CD4-positive, alpha-beta memory T cell (primary cell): ENCODE measurements at regions of chr16 and their contacts with region 1.

Region 1: DNA sequence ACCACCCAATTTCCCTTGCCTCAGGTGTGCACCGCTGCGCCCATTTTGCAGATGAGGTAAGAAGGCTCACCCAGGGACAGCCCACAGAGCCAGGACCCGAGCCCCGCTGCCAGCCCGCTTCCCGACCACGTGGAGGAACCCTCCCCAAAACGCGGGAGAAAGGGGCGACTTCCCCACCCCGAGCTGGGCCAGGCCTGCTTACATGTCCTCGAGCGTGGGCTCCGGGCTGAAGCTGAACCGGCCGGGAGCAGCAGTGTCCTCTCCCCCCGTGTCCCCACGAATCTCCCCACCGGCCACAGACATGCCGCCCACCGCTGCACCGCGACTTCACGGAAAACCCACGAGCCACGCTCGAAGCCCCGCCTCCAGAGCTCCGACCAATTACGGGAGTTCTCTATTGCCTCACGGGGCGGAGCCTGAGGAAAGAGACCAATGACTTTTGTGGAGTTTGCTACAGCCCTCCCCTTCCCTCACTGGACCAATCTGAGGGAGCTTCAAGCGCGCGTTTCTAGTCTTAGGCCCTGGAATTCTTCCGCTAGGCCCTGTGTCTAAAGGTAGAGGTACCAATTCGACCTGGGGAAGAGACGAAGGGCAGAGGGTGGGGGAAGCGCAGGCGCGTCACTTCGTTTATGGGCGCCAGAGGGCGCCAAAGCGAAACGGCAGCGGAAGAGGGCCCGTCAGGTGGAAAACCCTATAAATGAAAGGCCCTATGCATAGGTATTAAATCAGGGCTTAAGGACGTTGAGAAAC is at the start of gene DCTPP1:
- DNase-seq: peak; percentile 95 to 99 (median 98)
- H3K4me3 ChIP-seq: peak within 1 kb of the TSS; percentile 76 to 84
- H3K4me3 Mint-ChIP-seq: peak within 1 kb of the TSS in 1 of 8 donors; percentile 35
- H3K27ac ChIP-seq: peak within 1 kb of the TSS; percentile 72
- H3K27ac Mint-ChIP-seq: peak within 1 kb of the TSS in 2 of 7 donors; percentile 70 to 84
- H3K4me1 ChIP-seq: peaks cover 32% of the 10 kb centered on the region
- H3K4me1 Mint-ChIP-seq: peaks cover 17 to 28% (median 21%) of the 10 kb centered on the region in 4 donors
- H3K27me3 ChIP-seq: no peaks in the 10 kb centered on the region
- H3K27me3 Mint-ChIP-seq: no peaks in the 10 kb centered on the region
- total RNA-seq, gene DCTPP1: 15.0 to 18.0 TPM

Region 2: DNA sequence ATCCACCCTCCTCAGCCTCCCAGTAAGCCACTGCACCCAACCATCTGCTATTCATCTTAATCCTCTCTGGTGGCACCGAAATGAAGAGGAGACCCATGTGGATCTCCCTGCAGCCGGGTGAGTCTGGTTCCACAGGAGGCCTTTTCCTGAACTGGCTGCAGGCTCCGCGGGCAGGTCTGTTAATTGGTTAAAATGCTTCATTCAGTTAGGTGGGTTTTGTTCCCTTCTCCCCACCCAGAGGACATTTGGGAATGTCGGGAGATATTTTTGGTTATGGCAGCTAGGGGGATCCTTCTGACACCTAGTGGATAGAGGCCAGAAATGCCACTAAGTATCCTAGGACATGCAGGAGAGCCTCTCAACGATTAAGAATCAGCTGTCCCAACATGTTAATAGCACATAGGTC is 700.7 kb before region 1 on chr16:
- CTCF ChIA-PET with region 1: no interaction called
- POLR2A ChIA-PET with region 1: no interaction called
- intact Hi-C with region 1: no loop called
- DNase-seq: no peak
- H3K4me3 ChIP-seq: no peak overlapping the region
- H3K4me3 Mint-ChIP-seq: peak overlapping the region in 1 of 8 donors; percentile 20
- H3K27ac ChIP-seq: no peak overlapping the region
- H3K27ac Mint-ChIP-seq: peak overlapping the region in 3 of 7 donors; percentile 24 to 66 (median 36)
- H3K4me1 ChIP-seq: peaks cover 14% of the 10 kb centered on the region
- H3K4me1 Mint-ChIP-seq: peaks cover 17 to 32% (median 21%) of the 10 kb centered on the region in 4 donors
- H3K27me3 ChIP-seq: no peaks in the 10 kb centered on the region
- H3K27me3 Mint-ChIP-seq: no peaks in the 10 kb centered on the region

Region 3: DNA sequence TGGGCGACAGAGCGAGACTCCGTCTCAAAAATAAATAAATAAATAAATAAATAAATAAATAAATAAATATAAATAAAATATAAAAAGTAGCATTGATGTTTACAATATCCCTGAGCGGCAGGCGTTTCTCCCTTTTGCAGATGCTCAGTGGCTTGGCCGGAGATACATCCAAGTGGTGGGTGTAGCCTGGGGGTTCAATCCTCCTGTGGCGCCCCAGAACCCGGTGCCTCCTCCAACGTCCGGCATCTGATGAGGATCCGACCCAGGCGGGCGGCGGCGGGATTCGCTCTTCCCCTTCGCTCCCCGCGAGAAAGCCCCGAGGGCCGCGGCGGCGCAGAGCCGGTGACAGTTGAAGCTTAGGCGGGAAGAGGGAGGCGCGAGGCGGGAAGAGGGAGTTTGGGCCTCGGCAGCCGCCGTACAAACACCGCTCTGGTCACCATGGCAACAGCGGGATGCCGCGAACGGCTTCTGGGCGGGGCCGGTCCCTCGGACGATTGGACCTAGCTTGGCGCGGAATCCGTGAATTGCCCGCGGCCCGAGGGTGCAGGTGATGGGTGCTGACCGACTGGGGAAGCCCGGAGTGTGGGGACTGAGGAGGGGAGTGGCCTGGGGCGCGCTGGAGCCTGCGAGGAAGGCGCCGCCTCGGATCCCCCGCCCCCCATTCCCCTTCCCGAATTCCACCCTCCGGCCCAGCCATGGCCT is 377.0 kb before region 1 on chr16:
- CTCF ChIA-PET with region 1: no interaction called
- POLR2A ChIA-PET with region 1: no interaction called
- intact Hi-C with region 1: no loop called
- DNase-seq: peak; percentile 80 to 88 (median 82)
- H3K4me3 ChIP-seq: peak overlapping the region; percentile 23 to 64
- H3K4me3 Mint-ChIP-seq: peak overlapping the region; percentile 84 to 93 (median 87)
- H3K27ac ChIP-seq: no peak overlapping the region
- H3K27ac Mint-ChIP-seq: peak overlapping the region in 6 of 7 donors; percentile 53 to 94 (median 79)
- H3K4me1 ChIP-seq: peaks cover 21% of the 10 kb centered on the region
- H3K4me1 Mint-ChIP-seq: peaks cover 10 to 31% (median 23%) of the 10 kb centered on the region in 4 donors
- H3K27me3 ChIP-seq: no peaks in the 10 kb centered on the region
- H3K27me3 Mint-ChIP-seq: no peaks in the 10 kb centered on the region

Region 4: DNA sequence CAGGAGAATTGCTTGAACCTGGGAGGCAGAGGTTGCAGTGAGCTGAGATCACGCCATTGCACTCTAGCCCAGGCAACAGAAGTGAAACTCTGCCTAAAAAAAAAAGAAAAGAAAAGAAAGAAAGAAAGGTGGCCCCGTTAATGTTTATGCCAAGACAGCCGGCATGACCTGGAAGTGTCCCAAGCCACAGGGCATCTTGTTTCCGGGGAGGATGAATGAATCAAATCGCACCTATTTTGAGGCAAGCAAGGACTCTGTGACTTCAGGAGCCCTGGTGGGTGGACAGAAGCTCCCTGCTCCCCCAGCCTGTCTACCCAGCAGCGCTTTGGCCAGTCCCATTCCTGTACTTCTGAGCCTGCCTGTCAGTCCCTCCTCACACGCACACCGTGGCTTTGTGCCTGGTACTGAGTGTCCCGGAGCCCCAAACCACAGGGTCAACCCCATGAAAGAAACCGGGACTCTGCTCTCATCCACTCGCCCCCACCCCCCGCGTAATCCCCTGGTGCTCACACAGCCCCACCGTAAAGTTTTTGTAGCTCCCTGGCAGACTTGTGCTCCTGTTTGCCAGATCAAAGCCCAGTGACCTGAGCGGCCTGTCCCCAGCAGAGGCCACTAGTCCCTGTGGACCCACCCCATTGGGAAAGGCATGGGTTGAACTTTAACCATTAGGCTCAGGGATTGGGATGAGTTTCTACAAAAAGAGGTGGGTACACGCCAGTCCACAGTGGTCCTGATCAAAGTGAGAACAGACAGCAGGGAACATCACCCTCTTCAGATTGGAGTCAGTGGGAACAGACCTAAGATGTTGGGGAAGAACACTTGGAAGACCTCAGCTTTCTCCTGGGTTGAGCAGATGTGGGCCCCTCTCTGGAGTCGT is 94.0 kb before region 1 on chr16:
- CTCF ChIA-PET with region 1: no interaction called
- POLR2A ChIA-PET with region 1: no interaction called
- intact Hi-C with region 1: no loop called
- DNase-seq: peak in 1 of 5 donors; percentile 62
- H3K4me3 ChIP-seq: peak overlapping the region in 1 of 2 donors; percentile 47
- H3K4me3 Mint-ChIP-seq: peak overlapping the region; percentile 81 to 92 (median 86)
- H3K27ac ChIP-seq: peak overlapping the region; percentile 67
- H3K27ac Mint-ChIP-seq: peak overlapping the region; percentile 85 to 96 (median 90)
- H3K4me1 ChIP-seq: peaks cover 9% of the 10 kb centered on the region
- H3K4me1 Mint-ChIP-seq: peaks cover 8 to 31% (median 18%) of the 10 kb centered on the region in 4 donors
- H3K27me3 ChIP-seq: no peaks in the 10 kb centered on the region
- H3K27me3 Mint-ChIP-seq: no peaks in the 10 kb centered on the region

Region 5: GRCh38 chr16:30378236-30379204 is 51.3 kb before region 1 on chr16:
- CTCF ChIA-PET with region 1: no interaction called
- POLR2A ChIA-PET with region 1: interaction called, 20 read pairs
- intact Hi-C with region 1: no loop called
- DNase-seq: peak; percentile 98 to 99 (median 99)
- H3K4me3 ChIP-seq: peak overlapping the region; percentile 84 to 91
- H3K4me3 Mint-ChIP-seq: peak overlapping the region; percentile 91 to 100 (median 96)
- H3K27ac ChIP-seq: peak overlapping the region; percentile 96
- H3K27ac Mint-ChIP-seq: peak overlapping the region; percentile 97 to 100 (median 100)
- H3K4me1 ChIP-seq: peaks cover 69% of the 10 kb centered on the region
- H3K4me1 Mint-ChIP-seq: peaks cover 32 to 71% (median 48%) of the 10 kb centered on the region in 4 donors
- H3K27me3 ChIP-seq: no peaks in the 10 kb centered on the region
- H3K27me3 Mint-ChIP-seq: no peaks in the 10 kb centered on the region

Region 6: DNA sequence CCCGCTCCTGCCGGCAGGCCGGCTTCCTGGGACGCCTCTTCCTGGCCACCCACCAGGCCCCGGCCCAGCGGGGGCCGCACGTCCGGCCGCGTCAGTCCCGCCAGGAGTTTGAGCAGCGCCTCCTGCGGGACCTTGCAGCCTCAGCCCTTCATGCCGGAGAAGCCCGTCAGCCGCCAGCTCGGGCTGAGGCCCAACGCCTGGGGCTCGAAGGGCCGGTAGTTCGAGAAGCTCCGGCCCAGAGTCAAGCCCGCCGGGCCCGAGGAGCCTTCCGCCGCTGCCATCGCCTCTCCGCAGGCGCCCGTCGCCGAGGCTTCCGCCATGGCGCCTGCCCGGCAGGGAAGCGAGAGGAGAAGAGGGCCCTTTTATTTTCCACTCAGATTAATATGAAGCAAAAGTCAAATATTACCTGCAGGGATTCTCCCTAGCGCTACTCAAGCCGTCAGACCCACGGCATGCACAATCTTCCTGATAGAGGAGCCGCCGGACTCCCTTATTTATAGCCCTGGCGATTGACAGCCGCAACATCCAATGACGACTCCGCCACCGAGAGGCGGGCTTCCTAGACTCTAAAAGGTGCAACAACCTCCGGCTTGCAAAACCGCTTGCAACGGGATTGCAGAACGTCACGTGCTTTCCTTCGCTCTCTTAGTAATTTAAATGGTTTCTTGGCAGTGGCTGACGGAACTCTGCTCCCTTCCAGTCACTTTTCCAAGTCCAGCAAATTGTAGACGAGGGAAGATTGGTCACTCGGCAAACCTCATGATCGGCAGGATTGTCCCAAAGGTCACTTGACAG is 15.8 kb after region 1 on chr16 and contains the start of gene SEPHS2:
- CTCF ChIA-PET with region 1: interaction called, 39 read pairs
- POLR2A ChIA-PET with region 1: interaction called, 24 read pairs
- intact Hi-C with region 1: loop called (anchors 1 kb)
- DNase-seq: peak; percentile 93 to 98 (median 94)
- H3K4me3 ChIP-seq: peak within 1 kb of the TSS; percentile 92 to 94
- H3K4me3 Mint-ChIP-seq: peak within 1 kb of the TSS; percentile 89 to 98 (median 96)
- H3K27ac ChIP-seq: peak within 1 kb of the TSS; percentile 96
- H3K27ac Mint-ChIP-seq: peak within 1 kb of the TSS; percentile 87 to 98 (median 96)
- H3K4me1 ChIP-seq: peaks cover 42% of the 10 kb centered on the region
- H3K4me1 Mint-ChIP-seq: peaks cover 24 to 44% (median 36%) of the 10 kb centered on the region in 4 donors
- H3K27me3 ChIP-seq: no peaks in the 10 kb centered on the region
- H3K27me3 Mint-ChIP-seq: no peaks in the 10 kb centered on the region
- total RNA-seq, gene SEPHS2: 42.0 to 44.4 TPM

Region 7: DNA sequence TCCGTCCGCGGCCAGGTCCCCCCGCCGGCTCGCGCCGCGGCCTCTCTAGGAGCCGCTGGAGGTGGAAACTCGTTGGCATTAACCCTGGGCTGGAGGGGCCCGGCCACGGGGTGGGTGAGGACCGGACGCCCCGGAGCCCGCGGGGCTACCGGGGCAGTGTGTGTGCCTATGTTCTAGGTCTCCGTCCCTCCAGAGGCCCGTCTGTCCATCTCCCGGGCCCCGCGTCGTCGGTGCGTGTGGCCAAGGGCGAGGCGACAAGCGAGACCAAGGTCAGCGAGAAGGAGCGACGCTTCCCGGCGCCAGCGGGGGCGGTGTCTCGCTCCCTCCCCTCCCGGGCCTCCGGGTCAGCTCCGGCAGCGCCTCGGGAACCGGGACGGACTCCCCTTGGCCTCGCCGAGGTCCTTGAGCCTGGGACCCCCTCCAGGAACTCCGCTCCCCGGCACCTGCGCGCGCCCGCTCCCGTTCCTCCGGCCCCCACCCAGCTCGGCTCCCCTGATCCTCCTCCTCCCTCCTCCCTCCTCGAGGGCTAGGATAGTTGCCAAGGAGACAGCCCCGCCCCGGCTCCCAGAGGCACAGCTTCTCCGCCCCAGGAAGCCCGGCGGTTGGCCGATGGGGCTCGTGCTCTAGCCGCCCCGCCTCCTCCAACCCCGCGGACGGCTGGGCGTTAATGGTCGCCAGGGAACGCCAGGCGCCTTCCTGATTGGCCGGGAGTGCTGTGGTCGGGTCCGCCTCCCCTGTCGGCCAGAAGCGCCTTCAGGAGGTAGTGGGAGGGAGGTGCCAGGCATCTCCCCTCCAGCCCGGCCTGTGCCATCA is 97.2 kb after region 1 on chr16:
- CTCF ChIA-PET with region 1: interaction called, 13 read pairs
- POLR2A ChIA-PET with region 1: interaction called, 13 read pairs
- intact Hi-C with region 1: loop called (anchors 2 kb)
- DNase-seq: peak; percentile 81 to 92 (median 82)
- H3K4me3 ChIP-seq: peak overlapping the region in 1 of 2 donors; percentile 75
- H3K4me3 Mint-ChIP-seq: peak overlapping the region; percentile 81 to 88 (median 85)
- H3K27ac ChIP-seq: peak overlapping the region; percentile 72
- H3K27ac Mint-ChIP-seq: peak overlapping the region; percentile 86 to 95 (median 89)
- H3K4me1 ChIP-seq: peaks cover 43% of the 10 kb centered on the region
- H3K4me1 Mint-ChIP-seq: peaks cover 24 to 46% (median 34%) of the 10 kb centered on the region in 4 donors
- H3K27me3 ChIP-seq: no peaks in the 10 kb centered on the region
- H3K27me3 Mint-ChIP-seq: no peaks in the 10 kb centered on the region

Region 8: DNA sequence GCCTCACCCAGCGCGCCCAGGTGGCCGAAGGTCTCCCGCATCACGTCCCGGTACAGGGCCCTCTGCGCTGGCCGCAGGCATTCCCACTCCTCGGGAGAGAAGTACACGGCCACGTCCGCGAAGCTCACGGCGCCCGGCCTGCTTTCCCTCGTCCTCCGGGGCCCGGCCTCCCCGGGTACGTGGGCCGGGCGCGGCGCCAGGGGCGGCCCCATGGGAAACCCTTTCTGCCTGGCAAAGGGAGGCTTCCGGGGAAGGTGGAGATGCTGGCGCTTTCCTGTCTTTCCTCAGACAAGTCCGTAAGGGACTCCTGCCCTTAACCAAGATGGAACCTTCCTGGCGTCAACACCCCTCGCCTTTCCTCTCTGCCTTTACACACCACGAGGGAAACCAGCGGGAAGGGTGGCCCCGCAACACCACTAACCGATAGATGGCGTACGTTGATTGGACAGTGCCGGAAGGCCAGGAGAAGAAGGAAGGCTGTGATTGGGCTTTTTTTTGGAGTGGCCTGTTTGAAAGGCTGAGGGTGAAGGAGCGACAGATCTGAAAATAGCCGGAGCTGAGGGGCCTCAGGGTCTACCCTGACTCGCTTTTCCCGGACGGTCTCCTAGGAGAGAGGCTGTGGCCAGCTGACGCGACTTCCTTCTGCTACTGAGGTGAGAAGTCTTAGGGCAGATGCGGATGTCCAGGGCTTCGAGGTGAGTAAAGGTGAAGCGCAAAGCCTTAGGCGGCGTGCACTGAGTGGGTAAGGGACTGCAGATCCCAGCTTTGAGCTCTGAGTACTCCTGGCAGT is 155.7 kb after region 1 on chr16 and contains the start of gene ZNF785:
- CTCF ChIA-PET with region 1: interaction called, 6 read pairs
- POLR2A ChIA-PET with region 1: interaction called, 4 read pairs
- intact Hi-C with region 1: loop called (anchors 1 kb)
- DNase-seq: peak; percentile 94 to 96 (median 95)
- H3K4me3 ChIP-seq: peak within 1 kb of the TSS; percentile 73 to 97
- H3K4me3 Mint-ChIP-seq: peak within 1 kb of the TSS; percentile 87 to 96 (median 91)
- H3K27ac ChIP-seq: peak within 1 kb of the TSS; percentile 79
- H3K27ac Mint-ChIP-seq: peak within 1 kb of the TSS; percentile 76 to 96 (median 93)
- H3K4me1 ChIP-seq: peaks cover 21% of the 10 kb centered on the region
- H3K4me1 Mint-ChIP-seq: peaks cover 9 to 38% (median 26%) of the 10 kb centered on the region in 4 donors
- H3K27me3 ChIP-seq: no peaks in the 10 kb centered on the region
- H3K27me3 Mint-ChIP-seq: no peaks in the 10 kb centered on the region
- total RNA-seq, gene ZNF785: 33.4 to 34.2 TPM

Region 9: GRCh38 chr16:30637942-30638341 is 208.1 kb after region 1 on chr16:
- CTCF ChIA-PET with region 1: interaction called, 12 read pairs
- POLR2A ChIA-PET with region 1: interaction called, 4 read pairs
- intact Hi-C with region 1: loop called (anchors 1 kb)
- DNase-seq: peak in 4 of 5 donors; percentile 35 to 54 (median 36)
- H3K4me3 ChIP-seq: no peak overlapping the region
- H3K4me3 Mint-ChIP-seq: no peak overlapping the region
- H3K27ac ChIP-seq: no peak overlapping the region
- H3K27ac Mint-ChIP-seq: peak overlapping the region in 2 of 7 donors; percentile 53 to 68
- H3K4me1 ChIP-seq: peaks cover 13% of the 10 kb centered on the region
- H3K4me1 Mint-ChIP-seq: peaks cover 2 to 16% (median 10%) of the 10 kb centered on the region in 4 donors
- H3K27me3 ChIP-seq: no peaks in the 10 kb centered on the region
- H3K27me3 Mint-ChIP-seq: no peaks in the 10 kb centered on the region